Ascending aorta (tissue), 2 donors: ENCODE measurements at regions of chr6 and their contacts with region 1.

Region 1: GRCh38 chr6:160348142-160349019 is at the start of gene SLC22A3:
- DNase-seq: no peak
- H3K4me3 ChIP-seq: peak within 1 kb of the TSS; percentile 76 to 86
- H3K27ac ChIP-seq: peak within 1 kb of the TSS; percentile 91 to 96
- H3K4me1 ChIP-seq: peaks cover 0 to 2% of the 10 kb centered on the region in 2 donors
- H3K27me3 ChIP-seq: no peaks in the 10 kb centered on the region
- CTCF ChIP-seq: peak; percentile 30 to 42 (median 38)
- total RNA-seq, gene SLC22A3: 29.6 TPM

Region 2: GRCh38 chr6:160088069-160088783 is 260.2 kb before region 1 on chr6:
- intact Hi-C with region 1: loop called (anchors 5 kb)
- DNase-seq: peak in 1 of 2 donors; percentile 89
- H3K4me3 ChIP-seq: no peak overlapping the region
- H3K27ac ChIP-seq: peak overlapping the region in 1 of 2 donors; percentile 68
- H3K4me1 ChIP-seq: peaks cover 4 to 5% of the 10 kb centered on the region in 2 donors
- H3K27me3 ChIP-seq: no peaks in the 10 kb centered on the region
- CTCF ChIP-seq: peak; percentile 75 to 82 (median 82)

Region 3: DNA sequence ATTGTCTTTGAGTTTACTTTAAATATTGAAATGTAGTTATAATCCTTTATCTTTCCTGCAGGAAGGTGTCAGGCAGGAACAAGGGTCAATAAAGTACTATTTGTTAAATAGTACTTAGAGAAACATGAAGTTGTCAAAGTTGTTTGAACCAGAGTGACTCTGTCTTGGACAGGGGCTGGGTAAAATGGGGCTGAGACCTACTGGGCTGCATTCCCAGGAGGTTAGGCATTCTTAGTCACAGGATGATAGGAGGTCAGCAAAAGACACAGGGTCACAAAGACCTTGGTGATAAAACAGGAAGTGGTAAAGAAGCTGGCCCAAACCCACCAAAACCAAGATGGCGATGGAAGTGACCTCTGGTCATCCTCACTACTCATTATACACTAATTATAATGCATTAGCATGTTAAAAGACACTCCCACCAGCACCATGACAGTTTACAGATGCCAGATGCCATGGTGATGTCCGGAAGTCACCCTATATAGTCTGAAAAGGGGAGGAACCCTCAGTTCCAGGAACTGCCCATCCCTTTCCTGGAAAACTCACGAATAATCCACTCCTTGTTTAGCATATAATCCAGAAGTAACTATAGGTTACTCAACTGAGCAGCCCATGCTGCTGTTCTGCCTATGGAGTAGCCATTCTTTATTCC is 109.5 kb before region 1 on chr6:
- intact Hi-C with region 1: loop called (anchors 5 kb)
- DNase-seq: no peak
- H3K4me3 ChIP-seq: no peak overlapping the region
- H3K27ac ChIP-seq: peak overlapping the region in 1 of 2 donors; percentile 79
- H3K4me1 ChIP-seq: peaks cover 5 to 13% of the 10 kb centered on the region in 2 donors
- H3K27me3 ChIP-seq: no peaks in the 10 kb centered on the region
- CTCF ChIP-seq: no peak

Region 4: DNA sequence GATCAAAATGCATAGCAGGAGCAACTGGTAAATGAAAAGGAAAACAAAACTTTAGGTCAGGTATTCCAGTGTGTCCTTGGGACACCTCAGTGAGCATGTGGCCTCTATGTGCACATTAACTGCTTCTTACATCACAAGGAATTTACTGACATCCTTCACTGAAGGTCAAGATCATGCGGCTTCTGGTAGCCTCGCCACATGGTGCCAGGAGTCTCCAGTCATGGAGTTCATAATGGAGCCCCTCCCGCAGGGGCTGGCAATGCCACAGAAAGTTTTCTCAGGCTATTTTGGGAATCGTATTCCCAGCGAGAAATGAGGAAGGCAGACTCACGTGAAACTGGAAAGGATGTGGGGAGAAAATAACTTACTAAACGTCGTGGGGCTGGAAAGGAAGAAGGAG is 19.9 kb before region 1 on chr6:
- intact Hi-C with region 1: loop called (anchors 2 kb)
- DNase-seq: peak; percentile 43 to 90
- H3K4me3 ChIP-seq: no peak overlapping the region
- H3K27ac ChIP-seq: peak overlapping the region; percentile 79 to 91
- H3K4me1 ChIP-seq: peaks cover 6 to 22% of the 10 kb centered on the region in 2 donors
- H3K27me3 ChIP-seq: no peaks in the 10 kb centered on the region
- CTCF ChIP-seq: no peak

Region 5: DNA sequence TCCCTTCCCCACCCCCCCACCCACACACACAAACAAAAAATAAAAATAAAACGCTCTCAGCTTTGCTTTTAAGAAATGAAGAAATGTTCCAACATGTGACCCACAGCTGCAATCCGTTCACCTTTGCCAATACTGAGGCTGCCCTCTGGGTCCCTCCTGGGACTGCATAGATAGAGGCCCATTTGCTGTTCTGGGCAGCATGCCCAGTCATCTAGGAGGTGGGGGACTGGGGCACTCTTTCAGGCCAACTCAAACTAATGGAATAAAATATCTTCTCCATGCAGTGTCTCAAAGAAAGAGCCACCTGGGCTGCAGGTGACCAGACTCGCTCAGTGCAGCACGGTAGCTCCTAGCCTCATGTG is 79.7 kb after region 1 on chr6:
- intact Hi-C with region 1: loop called (anchors 5 kb)
- DNase-seq: peak in 1 of 2 donors; percentile 81
- H3K4me3 ChIP-seq: no peak overlapping the region
- H3K27ac ChIP-seq: peak overlapping the region; percentile 61 to 66
- H3K4me1 ChIP-seq: peaks cover 0 to 45% of the 10 kb centered on the region in 2 donors
- H3K27me3 ChIP-seq: no peaks in the 10 kb centered on the region
- CTCF ChIP-seq: no peak